Breast epithelium (tissue), 4 donors: ENCODE measurements at regions of chr3 and their contacts with region 1.

Region 1: GRCh38 chr3:414063-414462 is 217.5 kb downstream of the CHL1 start:
- DNase-seq: no peak
- H3K4me3 ChIP-seq: no peak overlapping the region
- H3K27ac ChIP-seq: no peak overlapping the region
- H3K4me1 ChIP-seq: no peaks in the 10 kb centered on the region
- H3K27me3 ChIP-seq: no peaks in the 10 kb centered on the region
- CTCF ChIP-seq: peak in 1 of 3 donors; percentile 21
- POLR2A ChIP-seq: no peak

Region 2: DNA sequence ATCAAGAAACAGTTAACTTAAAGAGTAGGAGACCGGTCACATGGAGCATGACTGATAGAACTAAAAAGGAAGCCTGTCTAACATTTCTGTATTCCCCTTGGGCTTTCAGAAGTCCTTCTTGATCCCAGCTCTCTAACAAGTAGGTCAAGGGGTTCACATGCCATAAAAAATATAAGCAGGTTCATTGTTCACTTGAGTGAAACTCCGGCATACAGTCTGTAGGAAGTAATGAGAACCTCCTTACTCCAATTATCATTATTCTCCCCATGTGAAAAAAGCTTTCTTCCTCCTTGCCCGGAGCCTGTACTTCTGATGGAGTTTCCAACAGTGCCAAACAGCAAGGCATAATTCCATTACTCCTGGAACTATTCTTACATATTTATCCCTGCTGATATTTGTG is 1441.8 kb after region 1 on chr3:
- intact Hi-C with region 1: loop called (anchors 10 kb)
- DNase-seq: no peak
- H3K4me3 ChIP-seq: no peak overlapping the region
- H3K27ac ChIP-seq: no peak overlapping the region
- H3K4me1 ChIP-seq: no peaks in the 10 kb centered on the region
- H3K27me3 ChIP-seq: no peaks in the 10 kb centered on the region
- CTCF ChIP-seq: no peak
- POLR2A ChIP-seq: no peak